ENCODE measurements at regions of chr15 and their contacts with region 1.

Region 1: DNA sequence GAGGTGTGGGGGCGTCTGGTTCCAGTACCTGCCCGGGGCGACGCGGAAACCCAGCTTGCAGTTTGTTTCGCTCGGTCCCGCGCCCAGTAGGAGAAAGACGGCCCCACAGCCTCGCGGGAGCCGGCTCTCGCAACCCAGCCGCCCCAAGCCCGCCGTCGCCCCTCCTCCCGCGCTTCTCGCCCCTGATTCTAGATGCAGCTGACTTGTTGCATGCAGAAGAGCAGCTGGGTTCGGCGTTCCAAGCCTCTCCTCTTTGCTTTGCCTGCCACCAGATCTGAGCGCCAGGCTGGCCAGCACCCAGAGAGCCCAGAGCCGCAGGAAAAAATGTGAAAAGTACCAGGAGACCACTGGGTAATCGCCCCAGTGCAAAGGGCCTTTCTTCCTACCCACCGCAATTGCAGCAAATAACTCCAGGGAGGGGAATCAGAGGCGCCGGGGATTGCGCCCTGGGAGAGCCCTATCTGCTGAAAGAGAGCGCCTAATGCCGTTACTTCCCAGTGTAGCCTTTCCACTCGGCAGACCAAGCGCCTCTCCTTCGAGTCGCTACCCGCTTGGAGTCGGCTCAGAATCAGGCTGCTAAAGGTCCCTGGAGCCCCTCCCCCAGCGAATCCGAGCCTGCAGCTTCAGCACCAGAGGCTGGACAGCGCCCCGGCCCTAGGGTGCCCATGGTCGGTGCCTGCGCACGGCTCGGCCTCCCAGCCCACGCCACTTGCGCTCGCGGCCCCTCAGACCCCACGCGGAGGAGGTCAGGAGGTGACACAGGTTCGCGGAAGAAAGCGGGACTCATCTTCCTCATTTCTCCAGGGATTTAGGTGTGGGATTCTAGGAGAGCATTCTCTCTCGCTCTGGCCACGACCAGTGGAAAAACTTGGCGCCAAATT is 15.7 kb upstream of the AEN start:
- DNase-seq: peak; percentile 70
- H3K4me3 ChIP-seq: peak overlapping the region in 1 of 2 experiments; percentile 48; a peak in 2 of 4 replicates
- H3K27ac ChIP-seq: no peak overlapping the region
- H3K4me1 ChIP-seq: peaks cover 0 to 16% of the 10 kb centered on the region in 2 experiments; a peak in 1 of 4 replicates
- H3K27me3 ChIP-seq: peaks cover 24% of the 10 kb centered on the region
- CTCF ChIP-seq: no peak
- EP300 ChIP-seq: no peak
- RAD21 ChIP-seq: no peak

Region 2: GRCh38 chr15:88090481-88091385 is 514.7 kb before region 1 on chr15:
- CTCF ChIA-PET with region 1: no interaction called
- POLR2A ChIA-PET with region 1: no interaction called
- DNase-seq: no peak
- H3K4me3 ChIP-seq: no peak overlapping the region
- H3K27ac ChIP-seq: no peak overlapping the region
- H3K4me1 ChIP-seq: peaks cover 0 to 2% of the 10 kb centered on the region in 2 experiments; a peak in 1 of 4 replicates
- H3K27me3 ChIP-seq: no peaks in the 10 kb centered on the region
- CTCF ChIP-seq: no peak
- EP300 ChIP-seq: no peak
- RAD21 ChIP-seq: no peak

Region 3: DNA sequence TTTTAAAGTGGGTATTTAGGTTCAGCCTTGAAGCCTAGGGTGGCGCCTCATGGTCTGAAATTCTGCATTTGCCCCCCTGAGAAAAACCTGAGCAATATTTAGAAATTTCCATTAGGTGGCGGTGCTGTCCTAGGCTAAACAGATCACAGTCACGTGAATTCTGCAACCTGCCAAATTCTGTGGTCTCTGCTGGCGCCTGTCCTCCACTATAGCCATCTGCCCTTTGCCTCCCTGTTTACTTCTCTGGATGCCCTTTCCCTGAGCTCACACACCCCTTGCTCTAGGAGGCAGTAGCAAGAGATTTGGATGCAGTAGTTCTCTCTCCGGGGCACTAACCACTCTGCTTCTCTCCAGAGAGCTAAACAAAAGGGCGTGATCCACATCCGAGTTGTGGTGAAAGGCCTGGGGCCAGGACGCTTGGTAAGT is 128.8 kb before region 1 on chr15:
- CTCF ChIA-PET with region 1: interaction called, 12 read pairs
- POLR2A ChIA-PET with region 1: no interaction called
- DNase-seq: peak; percentile 74
- H3K4me3 ChIP-seq: no peak overlapping the region; a peak in 1 of 4 replicates
- H3K27ac ChIP-seq: no peak overlapping the region; a peak in 1 of 4 replicates
- H3K4me1 ChIP-seq: peaks cover 0 to 3% of the 10 kb centered on the region in 2 experiments; a peak in 1 of 4 replicates
- H3K27me3 ChIP-seq: no peaks in the 10 kb centered on the region
- CTCF ChIP-seq: peak; percentile 63
- EP300 ChIP-seq: no peak
- RAD21 ChIP-seq: peak; percentile 90

Region 4: GRCh38 chr15:88586401-88587162 is 18.8 kb before region 1 on chr15:
- CTCF ChIA-PET with region 1: no interaction called
- POLR2A ChIA-PET with region 1: interaction called, 11 read pairs
- DNase-seq: peak; percentile 72
- H3K4me3 ChIP-seq: no peak overlapping the region
- H3K27ac ChIP-seq: peak overlapping the region in 1 of 2 experiments; percentile 34; a peak in 2 of 4 replicates
- H3K4me1 ChIP-seq: peaks cover 0 to 7% of the 10 kb centered on the region in 2 experiments; a peak in 2 of 4 replicates
- H3K27me3 ChIP-seq: no peaks in the 10 kb centered on the region
- CTCF ChIP-seq: no peak
- EP300 ChIP-seq: peak in 1 of 2 experiments; percentile 91; a peak in 2 of 4 replicates
- RAD21 ChIP-seq: peak; percentile 31

Measured in SK-N-SH (cell line).